Calu3 (cell line): ENCODE measurements at regions of chr2 and their contacts with region 1.

Region 1: DNA sequence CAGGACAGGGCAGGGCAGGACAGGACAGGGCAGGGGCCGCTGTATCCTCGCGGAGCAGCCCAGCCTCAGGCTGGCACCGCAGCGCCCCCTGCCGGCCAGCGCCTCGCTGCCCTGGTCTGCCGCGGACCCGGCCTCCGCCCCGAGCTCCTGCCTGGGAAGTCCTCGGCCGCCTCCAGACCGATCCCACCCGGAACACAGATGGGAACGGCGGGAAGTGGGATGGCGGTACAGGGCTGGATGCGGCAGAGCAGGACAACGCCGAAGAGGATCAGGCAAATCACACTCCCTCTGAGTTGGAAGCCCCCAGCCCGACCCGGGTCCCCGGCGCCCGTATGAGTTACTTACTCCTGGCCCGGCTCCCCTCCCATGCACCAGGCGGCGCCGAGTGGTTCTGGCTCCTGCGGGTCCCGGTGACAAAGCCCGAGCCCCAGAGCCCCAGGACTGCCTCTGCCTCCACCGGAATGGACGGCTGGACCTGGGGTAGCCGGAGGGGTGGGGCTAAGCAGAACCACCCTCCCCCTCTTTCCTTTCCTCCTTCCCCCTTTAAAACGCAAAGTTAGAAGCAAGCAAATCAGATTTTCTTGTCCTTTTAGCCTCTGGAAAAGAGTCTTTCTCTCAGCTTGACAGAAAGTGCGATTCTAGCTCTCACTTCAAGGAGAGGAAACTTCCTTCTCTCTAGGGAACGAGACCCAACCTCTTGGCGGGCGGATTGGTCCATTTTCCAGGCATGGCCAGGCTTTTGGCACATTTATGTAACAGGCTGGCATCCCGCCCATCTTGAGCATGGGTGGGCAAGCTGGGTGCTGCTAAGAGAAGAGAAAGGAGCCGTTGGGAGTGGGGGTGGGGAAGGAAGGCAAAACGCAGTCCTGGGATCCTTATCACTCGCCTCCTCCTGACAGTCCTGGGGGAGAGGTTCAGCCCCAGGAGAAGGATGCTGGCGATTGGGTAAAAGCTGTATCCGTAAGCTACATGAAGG is at the start of gene TP53I3:
- DNase-seq: peak; percentile 97
- H3K4me3 Mint-ChIP-seq: peak within 1 kb of the TSS; percentile 86
- H3K27ac Mint-ChIP-seq: peak within 1 kb of the TSS; percentile 80
- H3K4me1 Mint-ChIP-seq: peaks cover 10% of the 10 kb centered on the region
- H3K27me3 Mint-ChIP-seq: no peaks in the 10 kb centered on the region
- CTCF ChIP-seq: peak; percentile 98
- total RNA-seq, gene TP53I3: 13.9 TPM in 2 replicates

Region 2: GRCh38 chr2:23988371-23988770 is 96.3 kb before region 1 on chr2:
- CTCF ChIA-PET with region 1: interaction called, 3 read pairs
- intact Hi-C with region 1: loop called (anchors 1 kb)
- DNase-seq: no peak
- H3K4me3 Mint-ChIP-seq: no peak overlapping the region
- H3K27ac Mint-ChIP-seq: no peak overlapping the region
- H3K4me1 Mint-ChIP-seq: no peaks in the 10 kb centered on the region
- H3K27me3 Mint-ChIP-seq: no peaks in the 10 kb centered on the region
- CTCF ChIP-seq: peak; percentile 15

Region 3: GRCh38 chr2:24164125-24164973 is 79.7 kb after region 1 on chr2:
- CTCF ChIA-PET with region 1: interaction called, 13 read pairs
- intact Hi-C with region 1: loop called (anchors 5 kb)
- DNase-seq: peak; percentile 65
- H3K4me3 Mint-ChIP-seq: no peak overlapping the region
- H3K27ac Mint-ChIP-seq: no peak overlapping the region
- H3K4me1 Mint-ChIP-seq: no peaks in the 10 kb centered on the region
- H3K27me3 Mint-ChIP-seq: peaks cover 16% of the 10 kb centered on the region
- CTCF ChIP-seq: peak; percentile 95